CD8-positive, alpha-beta memory T cell (primary cell): ENCODE measurements at regions of chr19 and their contacts with region 1.

Region 1: DNA sequence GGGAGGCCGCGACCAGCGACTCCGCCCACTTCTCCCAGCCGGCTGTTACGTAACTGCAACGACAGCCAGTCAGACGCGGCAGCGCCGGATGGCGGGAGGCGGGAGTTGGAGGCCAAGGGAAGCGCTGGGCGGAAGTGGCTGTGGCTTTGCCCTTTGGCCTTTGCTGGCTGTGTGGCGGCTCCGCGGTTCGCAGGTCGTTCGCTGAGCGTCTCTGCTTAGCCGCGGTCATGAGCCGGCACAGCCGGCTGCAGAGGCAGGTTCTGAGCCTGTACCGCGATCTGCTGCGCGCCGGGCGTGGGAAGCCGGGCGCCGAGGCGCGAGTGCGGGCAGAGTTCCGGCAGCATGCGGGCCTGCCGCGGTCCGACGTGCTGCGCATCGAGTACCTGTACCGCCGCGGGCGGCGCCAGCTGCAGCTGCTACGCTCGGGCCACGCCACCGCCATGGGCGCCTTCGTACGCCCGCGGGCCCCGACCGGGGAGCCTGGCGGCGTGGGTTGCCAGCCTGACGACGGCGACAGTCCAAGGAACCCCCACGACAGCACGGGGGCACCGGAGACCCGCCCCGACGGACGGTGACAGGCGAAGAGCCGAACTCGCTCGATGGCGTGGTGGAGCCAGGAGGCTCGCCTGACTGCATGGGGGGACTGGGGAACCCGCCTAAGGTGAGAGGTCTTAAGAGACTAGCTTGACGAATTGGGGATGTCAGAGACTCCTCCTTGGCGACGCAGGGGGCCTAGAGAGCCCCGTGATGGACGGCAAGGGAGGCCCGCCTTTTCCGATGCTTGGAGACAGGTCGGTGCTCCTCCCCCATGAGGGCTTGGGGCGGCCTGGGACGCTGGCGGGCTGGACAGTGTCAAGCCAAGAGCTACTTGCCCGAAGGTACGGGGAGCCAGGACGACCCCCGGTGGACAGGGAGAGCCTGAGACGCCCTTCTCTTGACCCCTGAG is at the start of gene SDHAF1:
- DNase-seq: peak; percentile 85 to 94 (median 88)
- H3K4me3 ChIP-seq: peak within 1 kb of the TSS; percentile 87
- H3K4me3 Mint-ChIP-seq: peak within 1 kb of the TSS; percentile 89 to 96 (median 93)
- H3K27ac ChIP-seq: peak within 1 kb of the TSS; percentile 72
- H3K27ac Mint-ChIP-seq: peak within 1 kb of the TSS; percentile 89 to 98 (median 95)
- H3K4me1 ChIP-seq: peaks cover 22% of the 10 kb centered on the region
- H3K4me1 Mint-ChIP-seq: peaks cover 34 to 46% (median 41%) of the 10 kb centered on the region in 3 donors
- H3K27me3 ChIP-seq: no peaks in the 10 kb centered on the region
- H3K27me3 Mint-ChIP-seq: no peaks in the 10 kb centered on the region
- total RNA-seq, gene SDHAF1: 21.0 to 21.9 TPM

Region 2: GRCh38 chr19:35945121-35945792 is 50.1 kb before region 1 on chr19:
- CTCF ChIA-PET with region 1: no interaction called
- POLR2A ChIA-PET with region 1: no interaction called
- DNase-seq: no peak
- H3K4me3 ChIP-seq: no peak overlapping the region
- H3K4me3 Mint-ChIP-seq: no peak overlapping the region
- H3K27ac ChIP-seq: no peak overlapping the region
- H3K27ac Mint-ChIP-seq: peak overlapping the region in 5 of 8 donors; percentile 31 to 94 (median 54)
- H3K4me1 ChIP-seq: peaks cover 11% of the 10 kb centered on the region
- H3K4me1 Mint-ChIP-seq: peaks cover 24 to 42% (median 35%) of the 10 kb centered on the region in 3 donors
- H3K27me3 ChIP-seq: no peaks in the 10 kb centered on the region
- H3K27me3 Mint-ChIP-seq: peaks cover 0 to 2% of the 10 kb centered on the region in 2 donors

Region 3: DNA sequence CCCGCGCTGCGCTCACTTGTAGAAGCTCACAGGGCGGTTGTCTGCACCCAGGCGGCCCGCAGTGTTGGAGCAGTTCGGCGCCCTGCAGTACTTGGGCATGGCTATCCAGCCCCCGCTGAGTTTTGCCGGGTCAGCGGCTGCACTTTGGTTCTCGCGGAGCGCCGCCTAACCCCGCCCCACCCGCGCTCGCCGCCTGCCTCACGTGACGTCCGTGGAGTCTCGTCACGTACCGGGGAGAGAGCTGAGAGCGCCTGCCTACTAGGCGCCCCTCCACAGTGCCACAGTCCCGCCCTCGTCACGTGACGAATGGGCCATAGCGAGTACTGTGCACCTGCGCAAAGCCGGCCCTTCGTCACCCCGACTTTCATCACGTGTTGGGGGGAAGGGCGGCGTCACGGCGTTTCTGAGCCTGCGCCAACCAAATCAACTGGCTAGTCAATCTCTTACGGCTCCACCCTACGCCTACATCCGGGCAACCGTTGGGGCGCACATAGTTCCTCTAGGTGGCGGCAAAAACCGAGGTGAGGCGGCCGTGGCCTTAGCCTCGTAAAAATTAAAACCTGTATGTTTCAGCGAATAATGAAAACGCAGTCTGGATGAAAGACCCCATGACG is 58.9 kb after region 1 on chr19 and contains the start of gene THAP8:
- CTCF ChIA-PET with region 1: interaction called, 4 read pairs
- POLR2A ChIA-PET with region 1: interaction called, 10 read pairs
- DNase-seq: peak; percentile 100
- H3K4me3 ChIP-seq: peak within 1 kb of the TSS; percentile 99
- H3K4me3 Mint-ChIP-seq: peak within 1 kb of the TSS; percentile 94 to 100 (median 99)
- H3K27ac ChIP-seq: peak within 1 kb of the TSS; percentile 92
- H3K27ac Mint-ChIP-seq: peak within 1 kb of the TSS; percentile 96 to 100 (median 99)
- H3K4me1 ChIP-seq: peaks cover 12% of the 10 kb centered on the region
- H3K4me1 Mint-ChIP-seq: peaks cover 13 to 28% (median 26%) of the 10 kb centered on the region in 3 donors
- H3K27me3 ChIP-seq: no peaks in the 10 kb centered on the region
- H3K27me3 Mint-ChIP-seq: no peaks in the 10 kb centered on the region
- total RNA-seq, gene THAP8: 1.3 to 1.9 TPM